ENCODE measurements at regions of chr18 and their contacts with region 1.

Region 1: DNA sequence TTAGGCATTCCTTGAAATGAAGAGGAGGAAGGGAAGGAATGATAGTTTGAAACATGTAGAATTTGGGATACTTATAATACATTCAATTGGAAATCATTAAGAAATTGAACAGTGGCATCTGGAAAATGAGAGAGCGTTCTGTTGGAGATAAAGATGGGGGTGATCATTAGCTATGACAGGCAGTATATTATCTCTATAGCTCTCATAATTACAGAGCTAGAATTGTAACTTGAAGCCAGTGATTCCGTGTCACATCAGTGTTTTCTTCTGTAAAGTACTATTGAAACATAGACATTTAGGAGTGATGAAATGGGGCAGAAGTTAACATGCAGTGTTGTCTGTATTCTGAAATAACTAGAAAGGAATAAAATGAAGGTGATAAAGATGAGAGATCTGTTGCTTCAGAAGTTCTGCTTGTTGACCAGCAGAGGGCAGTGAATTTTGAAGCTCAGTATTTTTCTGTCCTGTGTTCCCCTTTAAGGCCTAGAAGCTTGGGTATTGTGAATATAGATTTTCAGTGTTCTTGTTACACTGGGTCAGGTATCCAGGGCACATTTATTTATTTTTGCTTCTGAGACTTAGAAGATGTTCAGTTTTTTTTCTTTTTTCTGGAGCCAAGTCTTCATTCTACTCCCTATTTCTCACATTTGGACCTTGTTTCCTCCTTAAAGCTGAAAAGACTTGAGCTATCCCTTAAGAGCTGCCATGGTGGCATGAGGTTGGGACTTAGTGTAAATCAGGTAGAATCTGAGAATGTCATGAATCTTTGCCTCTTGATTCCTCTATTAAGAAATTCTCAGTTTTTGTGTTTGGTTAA is 157.4 kb downstream of the TAF4B start:
- DNase-seq: peak; percentile 64
- ATAC-seq: peak; percentile 80
- H3K4me3 ChIP-seq: no peak overlapping the region
- H3K27ac ChIP-seq: no peak overlapping the region
- H3K4me1 ChIP-seq: peaks cover 17% of the 10 kb centered on the region
- H3K27me3 ChIP-seq: no peaks in the 10 kb centered on the region
- CTCF ChIP-seq: peak; percentile 81

Region 2: DNA sequence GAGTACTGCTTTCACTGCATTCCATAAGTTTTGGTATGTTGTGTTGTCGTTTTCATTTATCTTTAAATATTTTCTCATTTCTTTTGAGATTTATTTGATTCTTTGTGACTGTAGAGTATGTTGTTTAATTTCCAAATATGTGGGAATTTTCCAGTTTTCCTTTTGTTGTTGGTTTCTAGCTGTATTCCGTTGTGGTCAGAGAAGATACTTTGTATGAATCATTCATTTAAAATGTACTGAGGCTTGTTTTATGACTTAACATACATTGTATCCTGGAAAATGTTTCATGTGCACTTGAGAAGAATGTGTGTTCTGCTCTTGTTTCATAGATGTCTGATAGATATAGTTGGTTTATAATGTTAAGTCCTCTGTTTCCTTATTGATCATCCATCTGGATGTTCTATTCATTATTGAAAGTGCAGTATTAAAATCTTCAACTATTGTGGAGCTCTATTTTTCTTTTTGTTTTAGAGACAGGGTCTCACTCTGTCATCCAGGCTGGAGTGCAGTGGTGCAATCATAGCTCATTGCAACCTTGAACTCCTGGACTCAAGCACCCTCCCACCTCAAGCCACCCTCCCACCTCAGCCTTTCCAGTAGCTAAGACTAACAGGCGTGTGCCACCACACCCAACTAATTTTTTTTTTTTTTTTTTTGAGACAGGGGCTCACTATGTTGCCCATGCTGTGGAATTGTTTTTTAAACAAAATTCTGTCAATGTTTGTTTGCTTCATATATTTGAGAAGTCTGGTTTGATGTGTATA is 60.6 kb before region 1 on chr18:
- CTCF ChIA-PET with region 1: interaction called, 14 read pairs
- POLR2A ChIA-PET with region 1: interaction called, 6 read pairs
- intact Hi-C with region 1: no loop called
- DNase-seq: peak; percentile 72
- ATAC-seq: peak; percentile 93
- H3K4me3 ChIP-seq: no peak overlapping the region
- H3K27ac ChIP-seq: peak overlapping the region; percentile 45
- H3K4me1 ChIP-seq: peaks cover 28% of the 10 kb centered on the region
- H3K27me3 ChIP-seq: no peaks in the 10 kb centered on the region
- CTCF ChIP-seq: no peak

Region 3: DNA sequence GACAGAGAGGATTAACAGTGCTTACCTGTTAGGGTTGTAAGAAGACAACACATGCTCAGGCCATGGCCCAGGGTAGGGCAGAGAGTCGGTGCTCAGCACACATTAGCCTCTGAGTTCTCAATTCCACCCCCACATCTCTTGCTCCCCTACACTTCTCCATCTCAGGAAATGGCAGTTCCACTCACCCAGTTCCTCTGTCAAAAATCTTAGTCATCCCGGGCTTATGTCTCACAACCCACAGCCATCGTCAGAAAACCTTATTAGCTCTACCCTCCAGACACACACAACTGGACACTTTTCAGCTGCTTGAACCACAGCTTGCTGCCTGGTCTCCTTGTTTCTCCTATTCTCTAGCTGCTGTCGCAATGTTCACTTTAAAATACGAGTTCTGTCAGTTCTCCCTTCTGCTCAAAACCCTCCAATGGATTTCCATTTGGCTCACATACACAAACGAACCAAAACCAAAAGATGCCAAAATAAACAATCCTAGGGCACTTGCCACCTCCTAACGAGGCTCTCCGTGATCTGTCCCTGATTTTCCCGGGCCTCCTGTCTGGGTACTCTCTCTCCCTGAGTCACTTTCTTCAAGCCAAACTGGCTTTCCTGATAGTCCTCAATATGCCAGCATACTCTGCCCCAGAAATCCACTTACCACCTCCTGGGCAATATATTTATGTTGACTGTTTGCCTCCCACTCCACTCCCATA is 75.0 kb after region 1 on chr18:
- CTCF ChIA-PET with region 1: interaction called, 7 read pairs
- POLR2A ChIA-PET with region 1: no interaction called
- intact Hi-C with region 1: loop called (anchors 1 kb)
- DNase-seq: peak; percentile 20
- ATAC-seq: peak; percentile 18; the same call in 1 of the 2 replicates
- H3K4me3 ChIP-seq: no peak overlapping the region
- H3K27ac ChIP-seq: 0 out of 2 replicates have a peak overlapping the region, but pooled peaks have one; percentile 6
- H3K4me1 ChIP-seq: peaks cover 15% of the 10 kb centered on the region
- H3K27me3 ChIP-seq: no peaks in the 10 kb centered on the region
- CTCF ChIP-seq: no peak

Region 4: GRCh38 chr18:26593365-26594320 is 210.0 kb after region 1 on chr18:
- CTCF ChIA-PET with region 1: interaction called, 15 read pairs
- POLR2A ChIA-PET with region 1: no interaction called
- intact Hi-C with region 1: no loop called
- DNase-seq: no peak
- ATAC-seq: no peak
- H3K4me3 ChIP-seq: no peak overlapping the region
- H3K27ac ChIP-seq: no peak overlapping the region
- H3K4me1 ChIP-seq: no peaks in the 10 kb centered on the region
- H3K27me3 ChIP-seq: no peaks in the 10 kb centered on the region
- CTCF ChIP-seq: no peak

Region 5: GRCh38 chr18:26963292-26963691 is 579.6 kb after region 1 on chr18:
- CTCF ChIA-PET with region 1: no interaction called
- POLR2A ChIA-PET with region 1: no interaction called
- intact Hi-C with region 1: loop called (anchors 10 kb)
- DNase-seq: peak; percentile 37
- ATAC-seq: peak; percentile 75
- H3K4me3 ChIP-seq: no peak overlapping the region
- H3K27ac ChIP-seq: no peak overlapping the region
- H3K4me1 ChIP-seq: no peaks in the 10 kb centered on the region
- H3K27me3 ChIP-seq: peaks cover 11% of the 10 kb centered on the region; the same call in 1 of the 2 replicates
- CTCF ChIP-seq: peak; percentile 50

Region 6: DNA sequence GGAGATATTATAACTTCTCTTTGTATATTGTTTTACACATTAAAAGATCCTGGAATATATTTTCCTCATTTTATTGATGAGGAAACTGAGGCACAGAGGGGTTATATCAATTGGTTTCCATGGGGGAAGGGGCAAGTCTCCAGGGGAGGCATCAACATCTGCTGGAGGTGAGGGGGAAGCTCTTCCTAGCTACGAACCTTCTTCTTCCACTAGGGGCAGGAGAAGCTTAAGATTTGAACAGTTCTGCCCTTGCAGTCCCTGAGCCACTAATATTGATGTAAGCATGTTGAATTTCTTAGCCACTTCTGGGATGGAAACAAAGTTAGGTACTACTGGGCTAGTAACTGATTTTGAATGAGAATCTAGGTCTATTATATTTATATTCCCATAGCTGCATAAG is 621.9 kb after region 1 on chr18:
- CTCF ChIA-PET with region 1: no interaction called
- POLR2A ChIA-PET with region 1: no interaction called
- intact Hi-C with region 1: loop called (anchors 10 kb)
- DNase-seq: peak; percentile 44
- ATAC-seq: peak; percentile 69
- H3K4me3 ChIP-seq: no peak overlapping the region
- H3K27ac ChIP-seq: no peak overlapping the region
- H3K4me1 ChIP-seq: no peaks in the 10 kb centered on the region
- H3K27me3 ChIP-seq: peaks cover 36% of the 10 kb centered on the region
- CTCF ChIP-seq: peak; percentile 62